CD14-positive monocyte (primary cell): ENCODE measurements at regions of chr1 and their contacts with region 1.

Region 1: DNA sequence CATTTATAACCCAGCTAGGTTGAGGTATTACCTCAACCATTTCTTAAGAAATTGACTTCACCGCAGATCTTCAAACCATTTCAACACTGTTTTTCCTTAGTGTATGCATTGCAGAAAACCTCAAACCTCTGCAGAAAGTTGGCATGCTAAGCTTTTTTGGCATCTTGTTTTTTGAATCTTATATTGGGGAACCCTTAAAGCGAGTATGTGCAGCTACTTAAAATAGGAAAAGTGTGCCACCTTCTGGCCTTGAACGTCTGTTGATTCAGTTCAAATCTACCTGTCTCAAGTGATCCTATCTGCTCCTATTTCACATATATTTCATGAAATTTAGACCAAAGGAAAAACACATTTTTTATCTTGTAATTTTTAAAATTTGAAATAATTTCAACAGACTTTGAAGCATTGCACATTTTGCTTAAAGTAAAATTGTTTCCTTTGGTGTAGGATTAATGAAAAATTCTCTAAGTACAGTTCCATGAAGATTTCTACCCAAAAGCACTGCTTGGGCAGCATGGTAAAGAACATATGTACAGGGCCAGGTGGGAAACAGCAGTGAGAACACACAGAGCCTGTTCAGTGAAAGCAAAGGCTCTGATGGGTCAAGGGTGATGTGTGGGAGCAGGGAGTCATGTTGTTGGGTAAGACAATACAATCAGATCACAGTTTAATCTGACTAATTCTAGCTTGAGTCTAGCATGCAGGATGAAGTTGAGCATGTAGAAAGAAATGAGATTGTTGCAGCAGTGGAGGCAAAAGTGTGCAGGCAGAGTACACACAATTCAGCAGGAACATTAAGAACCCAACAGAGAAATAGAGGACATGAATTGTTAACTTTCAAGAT is 17.2 kb downstream of the HENMT1 start:
- DNase-seq: peak; percentile 33 to 56 (median 52)
- H3K4me3 ChIP-seq: no peak overlapping the region
- H3K4me3 Mint-ChIP-seq: no peak overlapping the region
- H3K27ac ChIP-seq: no peak overlapping the region
- H3K27ac Mint-ChIP-seq: peak overlapping the region in 1 of 7 donors; percentile 20
- H3K4me1 ChIP-seq: peaks cover 32 to 36% of the 10 kb centered on the region in 2 donors
- H3K4me1 Mint-ChIP-seq: peaks cover 51% of the 10 kb centered on the region
- H3K27me3 ChIP-seq: no peaks in the 10 kb centered on the region
- H3K27me3 Mint-ChIP-seq: peaks cover 0 to 2% (median 1%) of the 10 kb centered on the region in 3 donors
- CTCF ChIP-seq: peak; percentile 68

Region 2: DNA sequence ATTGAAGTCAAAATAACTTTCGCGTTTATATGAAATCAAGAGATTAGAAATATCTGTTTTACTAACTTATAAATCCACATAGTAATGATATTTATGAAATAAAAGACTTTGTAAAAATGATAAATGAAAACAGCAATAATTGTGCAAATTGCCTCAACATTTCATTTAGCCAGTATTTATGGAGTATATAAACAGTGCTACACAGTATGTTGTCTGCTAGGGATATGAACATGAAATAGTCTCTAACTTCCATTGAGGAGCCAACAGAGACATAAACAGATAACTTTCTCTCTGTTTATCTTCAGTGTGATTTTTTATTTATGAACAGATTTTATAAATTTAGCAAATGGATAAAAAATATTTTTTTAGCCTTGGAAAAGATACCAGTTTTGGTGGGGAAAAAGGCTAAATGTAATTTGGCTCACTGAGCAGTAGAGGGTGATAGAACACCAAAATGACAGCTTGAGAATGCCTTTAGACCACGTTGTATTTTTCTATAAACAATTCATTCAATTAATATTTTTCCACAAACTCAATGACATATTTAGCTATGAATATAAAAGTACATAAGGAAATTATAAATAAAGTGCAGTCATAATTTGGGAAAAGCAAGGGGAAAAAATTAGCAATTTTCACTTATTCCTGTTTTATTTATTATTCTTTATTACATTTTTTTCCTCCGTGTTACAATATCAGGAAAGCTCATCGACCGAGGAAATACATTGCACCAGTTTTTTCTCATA is 131.3 kb before region 1 on chr1:
- intact Hi-C with region 1: loop called (anchors 2 to 5 kb)
- DNase-seq: peak; percentile 30 to 60 (median 48)
- H3K4me3 ChIP-seq: no peak overlapping the region
- H3K4me3 Mint-ChIP-seq: no peak overlapping the region
- H3K27ac ChIP-seq: no peak overlapping the region
- H3K27ac Mint-ChIP-seq: no peak overlapping the region
- H3K4me1 ChIP-seq: peaks cover 3 to 5% of the 10 kb centered on the region in 2 donors
- H3K4me1 Mint-ChIP-seq: peaks cover 5% of the 10 kb centered on the region
- H3K27me3 ChIP-seq: peaks cover 18 to 27% of the 10 kb centered on the region in 2 donors
- H3K27me3 Mint-ChIP-seq: peaks cover 8 to 15% (median 14%) of the 10 kb centered on the region in 3 donors
- CTCF ChIP-seq: peak; percentile 95

Region 3: DNA sequence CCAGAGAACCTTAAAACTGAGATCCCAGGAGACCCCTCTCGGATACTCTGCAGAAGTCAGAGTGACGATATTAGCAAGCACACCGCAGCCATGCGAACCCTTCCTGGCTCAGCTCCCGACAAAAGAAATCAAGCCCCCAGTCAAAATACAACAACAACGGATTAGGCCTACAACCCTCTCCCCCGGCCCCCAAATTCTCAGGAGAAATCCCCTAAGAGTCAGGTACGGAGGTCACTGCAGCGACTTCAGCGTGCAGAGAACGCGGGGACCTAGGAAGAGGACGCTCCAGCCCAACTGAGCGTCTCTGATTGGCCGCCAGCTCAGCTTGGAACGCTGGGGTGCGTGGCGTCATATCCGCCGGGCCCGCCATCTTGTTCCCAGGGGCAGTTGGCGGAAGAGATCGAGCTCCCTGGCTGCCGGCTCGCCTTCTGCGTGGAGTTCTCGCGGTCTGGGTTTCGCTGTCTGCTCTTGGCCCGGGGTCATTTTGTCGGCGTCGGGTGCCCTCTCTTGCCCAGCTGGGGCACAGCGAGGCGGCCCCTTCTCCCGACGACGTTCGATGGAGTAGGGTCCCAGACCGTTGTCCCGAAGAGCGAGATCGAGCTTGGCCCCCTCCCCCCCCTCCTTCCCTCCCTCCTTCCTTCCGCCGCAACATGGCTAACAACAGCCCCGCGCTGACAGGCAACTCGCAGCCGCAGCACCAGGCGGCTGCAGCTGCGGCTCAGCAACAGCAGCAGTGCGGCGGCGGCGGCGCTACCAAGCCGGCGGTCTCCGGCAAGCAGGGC is 48.4 kb after region 1 on chr1 and contains the start of gene PRPF38B:
- intact Hi-C with region 1: no loop called
- DNase-seq: peak; percentile 89 to 91 (median 90)
- H3K4me3 ChIP-seq: peak within 1 kb of the TSS; percentile 67 to 86 (median 83)
- H3K4me3 Mint-ChIP-seq: peak within 1 kb of the TSS; percentile 92 to 98
- H3K27ac ChIP-seq: peak within 1 kb of the TSS; percentile 94 to 95
- H3K27ac Mint-ChIP-seq: peak within 1 kb of the TSS; percentile 97 to 99 (median 99)
- H3K4me1 ChIP-seq: peaks cover 18 to 42% of the 10 kb centered on the region in 2 donors
- H3K4me1 Mint-ChIP-seq: peaks cover 33% of the 10 kb centered on the region
- H3K27me3 ChIP-seq: no peaks in the 10 kb centered on the region
- H3K27me3 Mint-ChIP-seq: peaks cover 0 to 8% (median 5%) of the 10 kb centered on the region in 3 donors
- CTCF ChIP-seq: no peak
- polyA plus RNA-seq, gene PRPF38B: 4.9 to 29.9 (median 8.3) TPM